Heart right ventricle (tissue), 16 donors: ENCODE measurements at regions of chr17 and their contacts with region 1.

Region 1: GRCh38 chr17:78026381-78026780 is 67.9 kb downstream of the TNRC6C start:
- DNase-seq: no peak
- ATAC-seq: peak in 1 of 8 donors; percentile 15
- H3K4me3 ChIP-seq: no peak overlapping the region
- H3K27ac ChIP-seq: peak overlapping the region in 3 of 10 donors; percentile 2 to 39 (median 25)
- H3K4me1 ChIP-seq: peaks cover 0 to 27% (median 18%) of the 10 kb centered on the region in 9 donors
- H3K27me3 ChIP-seq: no peaks in the 10 kb centered on the region
- CTCF ChIP-seq: no peak

Region 2: DNA sequence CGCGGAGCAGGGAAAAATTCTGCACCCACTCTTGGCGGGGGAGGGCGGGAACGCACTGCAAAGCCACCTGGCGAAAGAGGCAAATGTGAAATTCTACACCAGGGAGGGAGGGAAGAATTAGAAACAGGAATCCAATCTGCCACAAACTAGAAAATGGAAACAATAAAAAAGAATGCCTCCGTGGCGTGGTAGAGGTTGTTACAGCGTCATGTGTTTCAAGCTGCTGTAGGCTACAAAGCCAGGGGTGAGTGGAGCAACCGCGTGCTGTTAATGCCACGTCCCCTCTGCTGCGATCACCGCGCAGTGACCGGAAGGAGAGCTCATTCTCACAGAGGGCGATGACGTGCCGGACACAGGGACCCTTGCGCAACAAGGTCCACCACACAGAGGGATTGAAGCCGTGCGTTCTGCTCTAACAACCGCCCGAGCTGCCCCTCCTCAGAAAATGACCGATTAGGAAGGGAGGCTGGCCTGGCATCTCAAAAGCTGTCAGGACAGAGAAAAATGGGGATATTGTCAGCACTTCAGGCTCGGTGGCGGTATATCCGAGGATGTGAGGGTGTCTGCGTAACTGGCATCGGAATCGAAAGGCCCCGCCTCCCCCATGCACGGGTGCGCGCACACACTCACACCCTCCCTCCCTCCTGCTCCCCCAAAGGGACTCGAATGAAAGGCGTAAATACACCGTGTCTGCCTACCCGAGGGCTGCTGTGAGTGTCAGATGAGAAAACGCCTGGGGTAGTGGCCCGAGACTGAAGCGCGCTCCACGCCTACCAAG is 138.7 kb before region 1 on chr17:
- intact Hi-C with region 1: loop called in 1 of 10 experiments (anchors 5 kb)
- DNase-seq: peak; percentile 84
- ATAC-seq: peak; percentile 80 to 93 (median 87)
- H3K4me3 ChIP-seq: peak overlapping the region; percentile 14 to 65 (median 50)
- H3K27ac ChIP-seq: peak overlapping the region in 9 of 10 donors; percentile 47 to 90 (median 69)
- H3K4me1 ChIP-seq: peaks cover 6 to 42% (median 14%) of the 10 kb centered on the region in 9 donors
- H3K27me3 ChIP-seq: peaks cover 0 to 11% (median 0%) of the 10 kb centered on the region in 7 donors
- CTCF ChIP-seq: no peak